ENCODE measurements at regions of chr5 and their contacts with region 1.

Region 1: GRCh38 chr5:127757576-127757975 is 54.4 kb downstream of the CCDC192 start:
- DNase-seq: peak; percentile 78
- ATAC-seq: peak; percentile 81
- H3K4me3 ChIP-seq: no peak overlapping the region
- H3K27ac ChIP-seq: no peak overlapping the region
- H3K4me1 ChIP-seq: peaks cover 6% of the 10 kb centered on the region
- H3K27me3 ChIP-seq: no peaks in the 10 kb centered on the region
- CTCF ChIP-seq: peak; percentile 84

Region 2: DNA sequence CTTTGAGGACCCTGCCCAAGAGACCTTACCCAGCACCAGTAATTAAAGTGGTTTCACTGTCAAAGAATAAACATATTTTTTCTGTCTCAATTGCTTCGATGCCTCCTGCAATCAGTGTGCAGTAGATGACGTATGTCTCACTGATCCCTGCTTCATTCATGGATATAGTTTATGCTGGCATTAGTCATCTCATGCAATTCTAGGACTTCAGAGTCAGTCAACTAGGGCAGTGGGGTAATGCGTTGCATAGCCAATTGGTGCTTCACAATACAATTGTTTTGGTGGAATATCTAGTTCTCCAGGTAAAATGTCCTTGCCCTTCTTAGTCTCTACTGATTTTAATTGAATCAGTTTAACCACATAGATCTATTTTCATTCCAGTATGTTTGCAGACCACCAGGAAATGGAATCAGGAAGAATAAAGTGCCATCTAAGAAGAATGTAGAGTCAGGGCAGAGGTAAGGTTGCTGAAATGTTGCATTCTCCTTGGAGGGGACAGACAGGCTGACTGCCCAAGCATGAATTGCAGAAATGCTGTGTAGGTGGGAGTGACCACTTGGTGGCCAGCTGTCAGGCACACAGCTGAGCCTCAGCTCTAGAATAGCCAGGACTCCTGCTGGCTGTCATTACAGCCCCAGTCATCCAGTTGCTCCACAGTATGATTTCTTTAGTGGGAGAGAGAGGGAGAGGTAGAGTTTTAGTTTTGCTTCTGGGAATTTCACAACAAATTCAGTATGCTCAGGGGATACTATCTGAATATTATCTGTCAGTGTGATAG is 540.5 kb before region 1 on chr5:
- CTCF ChIA-PET with region 1: no interaction called
- POLR2A ChIA-PET with region 1: no interaction called
- intact Hi-C with region 1: no loop called
- DNase-seq: no peak
- ATAC-seq: no peak
- H3K4me3 ChIP-seq: no peak overlapping the region
- H3K27ac ChIP-seq: no peak overlapping the region
- H3K4me1 ChIP-seq: no peaks in the 10 kb centered on the region
- H3K27me3 ChIP-seq: 0 out of 2 replicates have a peak, but pooled peaks cover under 1% of the 10 kb centered on the region
- CTCF ChIP-seq: no peak

Region 3: GRCh38 chr5:127785098-127785927 is 27.7 kb after region 1 on chr5:
- CTCF ChIA-PET with region 1: no interaction called
- POLR2A ChIA-PET with region 1: no interaction called
- intact Hi-C with region 1: loop called (anchors 2 kb)
- DNase-seq: peak; percentile 95
- ATAC-seq: peak; percentile 99
- H3K4me3 ChIP-seq: no peak overlapping the region
- H3K27ac ChIP-seq: no peak overlapping the region
- H3K4me1 ChIP-seq: peaks cover 14% of the 10 kb centered on the region
- H3K27me3 ChIP-seq: no peaks in the 10 kb centered on the region
- CTCF ChIP-seq: no peak

Region 4: GRCh38 chr5:127820910-127821553 is 63.5 kb after region 1 on chr5:
- CTCF ChIA-PET with region 1: no interaction called
- POLR2A ChIA-PET with region 1: no interaction called
- intact Hi-C with region 1: loop called (anchors 1 kb)
- DNase-seq: peak; percentile 92
- ATAC-seq: peak; percentile 98
- H3K4me3 ChIP-seq: no peak overlapping the region
- H3K27ac ChIP-seq: peak overlapping the region; percentile 32
- H3K4me1 ChIP-seq: peaks cover 11% of the 10 kb centered on the region
- H3K27me3 ChIP-seq: no peaks in the 10 kb centered on the region
- CTCF ChIP-seq: no peak

Region 5: GRCh38 chr5:127839496-127840197 is 82.1 kb after region 1 on chr5:
- CTCF ChIA-PET with region 1: no interaction called
- POLR2A ChIA-PET with region 1: interaction called, 6 read pairs
- intact Hi-C with region 1: loop called (anchors 1 kb)
- DNase-seq: no peak
- ATAC-seq: no peak
- H3K4me3 ChIP-seq: no peak overlapping the region
- H3K27ac ChIP-seq: peak overlapping the region; percentile 31; the same call in 1 of the 2 replicates
- H3K4me1 ChIP-seq: peaks cover 23% of the 10 kb centered on the region
- H3K27me3 ChIP-seq: no peaks in the 10 kb centered on the region
- CTCF ChIP-seq: no peak

Region 6: GRCh38 chr5:127934791-127935256 is 177.2 kb after region 1 on chr5:
- CTCF ChIA-PET with region 1: no interaction called
- POLR2A ChIA-PET with region 1: no interaction called
- intact Hi-C with region 1: loop called (anchors 1 kb)
- DNase-seq: peak; percentile 99
- ATAC-seq: peak; percentile 94
- H3K4me3 ChIP-seq: no peak overlapping the region
- H3K27ac ChIP-seq: peak overlapping the region; percentile 89
- H3K4me1 ChIP-seq: peaks cover 41% of the 10 kb centered on the region
- H3K27me3 ChIP-seq: no peaks in the 10 kb centered on the region
- CTCF ChIP-seq: peak; percentile 60

Region 7: DNA sequence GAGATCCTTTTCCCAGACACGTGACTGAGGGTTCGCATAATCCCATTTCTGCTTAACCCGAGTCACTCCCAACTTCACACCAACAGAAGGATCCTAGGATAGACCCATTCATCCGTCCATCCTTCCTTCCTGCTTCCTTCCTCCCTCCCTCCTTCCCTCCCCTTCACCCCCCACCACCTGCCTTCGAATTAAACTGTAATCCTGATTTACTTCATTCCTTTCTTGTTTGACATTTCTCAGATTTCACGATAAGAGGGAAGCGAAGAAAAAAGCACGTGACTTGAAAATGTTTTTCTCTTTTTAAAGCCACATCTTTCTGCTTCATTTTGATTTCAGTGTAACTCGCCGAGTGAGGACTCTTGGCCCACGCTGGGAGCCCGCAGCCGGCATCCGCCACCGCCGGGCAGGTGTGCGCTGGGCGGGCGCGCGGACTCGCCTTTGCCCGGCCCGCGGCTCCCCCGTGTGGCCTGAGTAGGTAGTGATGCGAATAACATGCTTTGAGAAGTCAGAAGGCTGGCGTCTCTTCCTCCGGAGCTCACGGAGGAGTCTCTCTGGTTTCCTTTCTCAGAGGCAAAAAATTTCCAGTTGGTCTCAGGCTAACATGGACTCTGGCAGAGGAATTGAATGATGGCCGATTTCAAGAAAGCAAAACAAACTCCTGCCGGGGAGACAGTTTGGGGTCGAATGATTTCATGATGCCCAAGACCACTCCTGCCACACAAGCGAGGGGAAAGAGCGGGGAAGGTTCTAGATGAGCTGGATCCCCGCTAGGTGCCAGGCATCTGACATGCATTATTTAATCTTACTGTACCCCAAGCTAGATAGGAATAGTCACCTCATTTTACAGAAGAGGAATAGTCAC is 443.7 kb after region 1 on chr5:
- CTCF ChIA-PET with region 1: interaction called, 4 read pairs
- POLR2A ChIA-PET with region 1: no interaction called
- intact Hi-C with region 1: loop called (anchors 2 kb)
- DNase-seq: peak; percentile 87
- ATAC-seq: peak; percentile 66
- H3K4me3 ChIP-seq: peak overlapping the region; percentile 57
- H3K27ac ChIP-seq: peak overlapping the region; percentile 4; the same call in 1 of the 2 replicates
- H3K4me1 ChIP-seq: peaks cover 33% of the 10 kb centered on the region
- H3K27me3 ChIP-seq: no peaks in the 10 kb centered on the region
- CTCF ChIP-seq: peak; percentile 96

Measured in PC-3 (cell line).